HEK293T (cell line): ENCODE measurements at regions of chr1 and their contacts with region 1.

Region 1: GRCh38 chr1:155135415-155136028 is at the start of gene SLC50A1:
- DNase-seq: peak; percentile 99

Region 2: DNA sequence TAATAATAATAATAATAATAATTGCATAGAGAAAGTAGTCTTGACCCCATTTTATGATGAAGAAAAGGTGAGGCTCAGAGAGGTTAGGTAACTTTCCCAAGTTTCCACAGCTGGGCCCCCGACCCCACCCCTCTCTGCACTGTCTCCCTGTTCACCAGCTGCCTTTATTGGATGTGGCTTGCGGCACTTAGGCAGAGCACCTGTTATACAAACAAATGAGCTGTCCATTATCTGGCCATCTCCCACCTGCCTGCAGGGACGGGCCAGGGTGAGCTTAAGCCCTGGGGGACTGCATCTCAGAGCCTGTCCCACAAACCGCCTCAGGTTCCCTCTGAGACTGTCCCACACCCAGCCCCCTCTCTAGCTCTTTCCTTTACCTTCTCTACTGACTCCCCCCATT is 17.9 kb before region 1 on chr1:
- CTCF ChIA-PET with region 1: no interaction called
- POLR2A ChIA-PET with region 1: interaction called, 12 read pairs
- DNase-seq: no peak